ENCODE measurements at regions of chr6 and their contacts with region 1.

Region 1: DNA sequence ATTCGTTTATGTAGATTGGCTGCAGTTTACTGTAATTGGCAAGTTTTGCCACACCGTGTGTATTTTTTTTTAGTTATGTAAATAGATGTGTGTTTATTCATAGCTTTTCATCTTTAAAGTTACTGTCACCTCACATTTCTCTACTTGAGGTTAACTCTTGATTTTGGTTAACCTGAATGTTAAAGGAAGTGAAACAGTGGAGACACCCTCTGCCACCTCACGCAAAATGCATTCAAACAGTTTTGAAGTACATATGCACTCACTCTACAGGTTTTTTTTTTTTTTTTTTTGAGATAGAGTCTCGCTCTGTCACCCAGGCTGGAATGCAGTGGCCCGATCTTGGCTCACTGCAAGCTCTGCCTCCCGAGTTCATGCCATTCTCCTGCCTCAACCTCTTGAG is 17.7 kb downstream of the OR2A4 start:
- DNase-seq: no peak
- ATAC-seq: peak; percentile 67
- H3K4me3 Mint-ChIP-seq: peak overlapping the region; percentile 69
- H3K27ac Mint-ChIP-seq: peak overlapping the region; percentile 86
- H3K4me1 Mint-ChIP-seq: peaks cover 60% of the 10 kb centered on the region
- H3K27me3 Mint-ChIP-seq: no peaks in the 10 kb centered on the region
- CTCF ChIP-seq: no peak

Region 2: DNA sequence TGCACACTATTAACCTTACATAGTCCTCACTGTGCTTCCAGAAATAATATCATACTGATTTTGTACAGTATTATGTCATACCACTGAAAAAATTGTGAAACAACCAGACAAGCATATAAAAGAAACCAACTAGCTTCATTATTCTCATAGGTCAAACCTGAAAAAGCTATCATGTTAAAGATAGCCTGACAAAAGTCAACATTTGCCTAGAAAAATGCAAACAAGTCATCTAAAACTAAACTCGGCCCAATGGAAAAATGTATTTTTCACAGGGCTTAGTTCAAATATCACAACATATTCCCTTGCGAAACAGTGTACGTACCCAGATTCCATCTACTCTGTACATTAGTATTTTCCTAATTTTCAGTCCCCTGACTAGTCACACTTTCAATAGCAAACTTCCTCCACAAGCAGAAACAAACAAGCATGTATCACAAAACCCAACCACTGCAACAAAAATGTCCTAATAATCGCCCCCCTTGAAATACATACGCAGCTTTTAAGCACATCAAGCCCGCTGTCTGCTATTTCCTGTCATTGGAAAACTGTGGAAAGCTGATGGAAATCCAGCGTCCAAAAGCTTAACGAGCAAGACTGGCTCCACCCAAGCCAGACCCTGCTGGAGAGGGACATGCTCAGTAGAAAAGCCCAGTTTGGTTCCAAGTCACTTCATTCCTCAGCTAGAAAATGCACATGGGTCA is 713.5 kb before region 1 on chr6:
- CTCF ChIA-PET with region 1: no interaction called
- POLR2A ChIA-PET with region 1: no interaction called
- intact Hi-C with region 1: no loop called
- DNase-seq: no peak
- ATAC-seq: no peak
- H3K4me3 Mint-ChIP-seq: no peak overlapping the region
- H3K27ac Mint-ChIP-seq: no peak overlapping the region
- H3K4me1 Mint-ChIP-seq: peaks cover 17% of the 10 kb centered on the region
- H3K27me3 Mint-ChIP-seq: no peaks in the 10 kb centered on the region
- CTCF ChIP-seq: no peak

Region 3: GRCh38 chr6:131627724-131628682 is 55.5 kb before region 1 on chr6 and contains the start of gene MED23:
- CTCF ChIA-PET with region 1: interaction called, 14 read pairs
- POLR2A ChIA-PET with region 1: interaction called, 5 read pairs
- intact Hi-C with region 1: loop called (anchors 1 kb)
- DNase-seq: peak; percentile 98
- ATAC-seq: peak; percentile 95
- H3K4me3 Mint-ChIP-seq: peak within 1 kb of the TSS; percentile 99
- H3K27ac Mint-ChIP-seq: peak within 1 kb of the TSS; percentile 94
- H3K4me1 Mint-ChIP-seq: peaks cover 31% of the 10 kb centered on the region
- H3K27me3 Mint-ChIP-seq: no peaks in the 10 kb centered on the region
- CTCF ChIP-seq: peak; percentile 62
- total RNA-seq, gene MED23: 45.3 and 51.0 TPM in 2 replicates

Region 4: DNA sequence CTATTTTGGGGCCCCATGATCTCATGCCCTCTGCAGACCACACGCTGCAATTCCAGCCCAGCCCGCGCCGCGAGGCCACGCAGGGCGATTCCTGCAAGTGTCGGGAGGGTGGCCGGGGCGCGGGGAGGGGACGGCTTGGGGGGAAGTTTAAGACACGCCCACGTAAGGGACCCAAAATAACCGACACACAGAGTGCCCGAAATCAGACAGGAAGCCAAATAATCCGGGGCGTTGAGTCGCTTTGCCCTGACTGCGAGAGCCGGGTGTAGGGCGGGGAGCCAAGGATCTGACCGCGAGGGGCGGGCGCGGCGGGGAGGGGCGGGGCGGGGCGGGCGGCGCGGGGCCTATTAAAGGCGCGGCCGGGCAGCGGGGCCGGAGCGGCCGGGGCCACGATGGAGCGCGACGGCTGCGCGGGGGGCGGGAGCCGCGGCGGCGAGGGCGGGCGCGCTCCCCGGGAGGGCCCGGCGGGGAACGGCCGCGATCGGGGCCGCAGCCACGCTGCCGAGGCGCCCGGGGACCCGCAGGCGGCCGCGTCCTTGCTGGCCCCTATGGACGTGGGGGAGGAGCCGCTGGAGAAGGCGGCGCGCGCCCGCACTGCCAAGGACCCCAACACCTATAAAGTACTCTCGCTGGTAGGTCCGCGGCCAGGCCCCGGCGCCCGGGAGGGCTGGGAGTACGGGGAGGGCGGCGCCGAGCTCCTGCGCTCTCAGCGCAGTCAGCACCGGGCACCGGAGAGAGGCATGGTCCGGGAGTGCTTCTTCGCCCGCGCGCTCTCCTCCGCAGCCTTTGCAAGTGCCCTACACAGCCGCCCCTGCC is 124.4 kb after region 1 on chr6 and contains the start of gene ENPP1:
- CTCF ChIA-PET with region 1: no interaction called
- POLR2A ChIA-PET with region 1: no interaction called
- intact Hi-C with region 1: loop called (anchors 2 kb)
- DNase-seq: peak; percentile 45
- ATAC-seq: peak; percentile 79
- H3K4me3 Mint-ChIP-seq: peak within 1 kb of the TSS; percentile 90
- H3K27ac Mint-ChIP-seq: peak within 1 kb of the TSS; percentile 42
- H3K4me1 Mint-ChIP-seq: peaks cover 16% of the 10 kb centered on the region
- H3K27me3 Mint-ChIP-seq: peaks cover 32% of the 10 kb centered on the region
- CTCF ChIP-seq: no peak
- total RNA-seq, gene ENPP1: 0.27 and 1.3 TPM in 2 replicates

Region 5: DNA sequence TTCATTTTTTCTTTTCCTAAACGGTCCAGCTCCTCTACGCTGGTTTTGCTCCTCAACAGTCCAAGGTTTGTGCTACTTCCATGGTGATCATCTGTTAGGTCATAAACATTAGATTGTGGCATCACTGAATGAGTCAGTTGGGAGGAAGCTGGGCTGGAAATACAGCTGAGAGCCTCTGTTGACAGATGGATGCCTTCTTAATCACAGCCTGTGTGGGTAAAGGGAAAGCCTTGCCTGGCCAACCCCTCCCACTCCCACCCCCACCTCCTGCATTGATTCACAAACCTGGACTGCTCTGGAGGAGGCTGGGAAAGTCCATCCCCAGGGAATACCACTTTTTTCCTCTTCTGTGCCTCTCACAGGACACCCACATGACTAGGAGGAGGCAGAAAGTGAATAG is 448.3 kb after region 1 on chr6:
- CTCF ChIA-PET with region 1: no interaction called
- POLR2A ChIA-PET with region 1: interaction called, 8 read pairs
- intact Hi-C with region 1: loop called (anchors 5 kb)
- DNase-seq: no peak
- ATAC-seq: peak; percentile 58
- H3K4me3 Mint-ChIP-seq: peak overlapping the region; percentile 21
- H3K27ac Mint-ChIP-seq: peak overlapping the region; percentile 72
- H3K4me1 Mint-ChIP-seq: peaks cover 68% of the 10 kb centered on the region
- H3K27me3 Mint-ChIP-seq: no peaks in the 10 kb centered on the region
- CTCF ChIP-seq: no peak

Region 6: GRCh38 chr6:132365281-132365907 is 681.9 kb after region 1 on chr6:
- CTCF ChIA-PET with region 1: no interaction called
- POLR2A ChIA-PET with region 1: no interaction called
- intact Hi-C with region 1: loop called (anchors 5 kb)
- DNase-seq: no peak
- ATAC-seq: peak; percentile 83
- H3K4me3 Mint-ChIP-seq: peak overlapping the region; percentile 44
- H3K27ac Mint-ChIP-seq: peak overlapping the region; percentile 82
- H3K4me1 Mint-ChIP-seq: peaks cover 61% of the 10 kb centered on the region
- H3K27me3 Mint-ChIP-seq: no peaks in the 10 kb centered on the region
- CTCF ChIP-seq: no peak

Region 7: DNA sequence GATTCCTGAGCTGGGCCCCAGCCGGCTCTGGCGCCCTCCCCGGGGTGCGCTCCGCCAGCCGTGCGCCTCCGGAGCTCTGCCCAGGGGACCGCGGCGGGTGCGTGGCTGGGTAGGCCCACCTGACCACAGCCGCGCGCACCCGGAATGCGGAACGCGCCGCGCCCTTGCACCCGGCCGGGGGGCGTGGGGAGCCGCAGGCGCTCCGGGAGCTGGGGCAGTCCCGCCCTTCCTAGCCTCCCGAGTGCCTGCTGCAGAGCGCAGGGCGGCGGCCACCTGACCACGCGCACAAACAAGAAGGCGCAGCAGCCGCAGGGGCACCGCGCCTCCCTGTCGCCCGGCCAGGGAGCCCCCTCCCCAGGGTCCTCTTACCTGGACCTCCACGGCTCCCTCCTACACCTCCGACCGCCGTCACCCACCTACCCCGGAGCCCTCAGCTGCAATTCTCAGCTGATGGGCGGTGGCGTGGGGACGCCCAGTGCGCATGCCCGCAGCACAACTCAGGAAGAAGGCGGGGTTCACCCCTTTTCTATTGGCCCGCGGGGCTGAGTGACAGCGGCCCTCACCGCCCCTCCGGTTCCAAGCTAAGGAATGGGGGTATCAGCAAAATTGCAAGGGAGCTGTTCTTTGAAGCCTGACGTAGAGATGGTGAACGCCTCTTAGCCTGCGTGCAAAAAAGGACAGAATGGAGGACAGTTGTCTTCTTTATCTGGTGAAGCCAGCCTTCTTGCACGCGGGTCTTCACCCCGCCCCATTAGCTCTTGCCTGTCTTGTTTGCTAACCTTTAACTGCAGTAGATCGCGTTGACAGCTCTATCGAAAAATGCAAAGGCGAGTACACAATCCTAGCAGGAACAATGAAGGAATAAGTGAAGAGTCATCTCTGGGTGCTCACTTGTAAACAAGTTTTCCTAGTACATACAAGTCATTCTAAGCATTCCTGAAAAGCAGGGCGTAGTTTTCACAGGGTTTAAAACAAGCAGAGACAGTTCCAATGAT is 829.5 kb after region 1 on chr6 and contains the start of gene STX7:
- CTCF ChIA-PET with region 1: no interaction called
- POLR2A ChIA-PET with region 1: interaction called, 5 read pairs
- intact Hi-C with region 1: loop called (anchors 2 kb)
- DNase-seq: peak; percentile 89
- ATAC-seq: peak; percentile 82
- H3K4me3 Mint-ChIP-seq: peak within 1 kb of the TSS; percentile 96
- H3K27ac Mint-ChIP-seq: peak within 1 kb of the TSS; percentile 97
- H3K4me1 Mint-ChIP-seq: peaks cover 68% of the 10 kb centered on the region
- H3K27me3 Mint-ChIP-seq: no peaks in the 10 kb centered on the region
- CTCF ChIP-seq: no peak
- total RNA-seq, gene STX7: 109 and 138 TPM in 2 replicates